ENCODE measurements at regions of chr3 and their contacts with region 1.

Region 1: DNA sequence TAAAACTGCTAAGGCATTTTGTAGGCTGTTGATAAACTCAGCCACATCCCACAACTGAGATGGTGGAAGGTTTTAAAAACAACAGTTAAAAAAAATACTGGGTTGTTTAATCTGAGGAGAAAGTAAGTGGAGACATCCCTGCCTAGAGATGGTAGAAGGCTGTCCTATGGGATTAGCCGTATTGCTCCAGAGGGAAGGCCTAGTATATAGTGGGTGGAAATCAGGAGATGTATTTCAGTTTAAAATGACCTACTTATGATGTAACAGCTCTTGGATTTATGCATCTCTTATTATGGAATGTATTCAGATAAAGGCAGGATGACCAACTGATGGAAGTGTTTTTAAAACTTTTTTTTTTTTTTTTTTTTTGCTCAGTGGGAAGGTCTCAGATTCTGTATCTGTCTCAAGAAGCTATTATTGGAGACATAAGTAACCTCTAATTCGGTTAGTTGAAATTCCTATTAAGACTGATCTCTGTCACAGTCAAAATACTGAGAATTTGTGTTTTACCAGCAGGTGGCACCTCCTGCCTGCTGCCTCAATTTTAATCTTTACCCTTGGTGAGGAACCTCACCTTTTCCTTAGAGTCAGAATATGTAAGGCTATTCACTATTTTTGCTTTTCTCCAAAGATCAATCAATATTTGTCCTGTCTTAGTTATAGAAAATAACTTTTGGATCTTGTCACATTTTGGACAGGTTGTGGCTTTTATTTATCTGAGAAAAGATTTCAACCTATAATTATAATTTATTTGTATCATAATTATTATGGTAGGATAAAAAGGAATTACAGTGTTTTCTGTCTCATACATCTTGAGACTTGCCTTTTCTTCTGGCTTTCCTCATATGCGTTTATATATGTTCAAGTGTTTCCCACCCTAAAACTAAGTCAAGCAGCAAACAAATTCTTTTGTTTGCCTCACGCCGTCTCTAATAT is 63.0 kb downstream of the VPS8 start:
- DNase-seq: no peak
- ATAC-seq: no peak
- H3K4me3 ChIP-seq: no peak overlapping the region
- H3K27ac ChIP-seq: no peak overlapping the region
- H3K4me1 ChIP-seq: peaks cover 4 to 14% of the 10 kb centered on the region in 2 donors
- H3K27me3 ChIP-seq: no peaks in the 10 kb centered on the region
- CTCF ChIP-seq: peak in 1 of 5 experiments; percentile 30
- POLR2A ChIP-seq: no peak

Region 2: DNA sequence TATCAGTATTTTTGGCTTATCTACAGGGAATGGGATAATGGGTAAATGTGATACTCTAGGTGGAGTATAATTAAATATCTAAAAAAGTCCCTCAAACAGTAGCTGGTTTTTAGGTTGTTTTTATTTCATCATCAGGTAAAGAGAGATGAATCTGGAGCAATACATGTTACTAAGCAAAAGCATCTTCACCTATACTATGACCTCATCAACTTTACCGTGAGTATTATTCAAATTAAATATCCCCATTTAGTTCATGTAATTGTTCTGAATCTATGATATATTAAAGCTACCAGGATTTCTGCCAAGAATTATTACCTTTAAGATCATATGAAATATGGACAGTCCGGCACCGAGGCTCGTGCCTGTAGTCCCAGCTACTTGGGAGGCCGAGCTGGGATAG is 15.1 kb before region 1 on chr3:
- in situ Hi-C with region 1: no loop called
- intact Hi-C with region 1: no loop called
- DNase-seq: no peak
- ATAC-seq: no peak
- H3K4me3 ChIP-seq: no peak overlapping the region
- H3K27ac ChIP-seq: no peak overlapping the region
- H3K4me1 ChIP-seq: no peaks in the 10 kb centered on the region
- H3K27me3 ChIP-seq: no peaks in the 10 kb centered on the region
- CTCF ChIP-seq: no peak
- POLR2A ChIP-seq: no peak

Region 3: DNA sequence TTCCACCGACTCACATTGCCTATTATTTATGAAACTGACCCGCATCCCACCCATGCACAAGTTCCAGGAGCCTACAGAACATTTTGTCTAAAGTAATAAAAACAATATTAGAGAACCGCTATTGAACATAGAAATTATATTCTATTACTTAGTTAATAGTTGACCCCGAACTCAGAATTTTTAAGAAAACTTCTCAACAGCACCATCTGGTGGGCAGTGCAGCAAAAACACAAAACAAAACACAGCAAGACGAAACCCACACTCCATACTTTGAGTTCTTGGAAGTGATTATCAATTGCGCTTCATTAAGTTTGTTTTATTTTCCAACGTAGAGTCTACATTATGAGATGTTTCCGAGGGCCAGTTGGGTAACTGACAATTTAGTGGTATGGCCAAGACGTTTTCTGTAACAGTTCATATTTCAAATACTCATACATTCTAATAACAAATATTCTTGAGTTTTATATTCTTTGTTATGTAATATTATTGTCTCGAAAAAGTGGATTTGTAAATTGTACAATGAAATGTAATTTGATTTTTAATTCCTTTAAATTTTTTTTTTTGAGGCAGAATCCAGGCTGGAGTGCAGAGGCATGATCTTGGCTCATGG is 301.9 kb after region 1 on chr3:
- in situ Hi-C with region 1: loop called in 2 of 4 experiments (anchors 25 kb)
- intact Hi-C with region 1: loop called (anchors 5 kb)
- DNase-seq: no peak
- ATAC-seq: no peak
- H3K4me3 ChIP-seq: no peak overlapping the region
- H3K27ac ChIP-seq: no peak overlapping the region
- H3K4me1 ChIP-seq: no peaks in the 10 kb centered on the region
- H3K27me3 ChIP-seq: no peaks in the 10 kb centered on the region
- CTCF ChIP-seq: peak in 4 of 5 experiments; percentile 18 to 55 (median 46)
- POLR2A ChIP-seq: no peak

Measured in gastrocnemius medialis (tissue), 4 donors.